Activated CD4-positive, alpha-beta T cell treated with anti-CD3 and anti-CD28 coated beads for 36 hours (primary cell): ENCODE measurements at regions of chr9 and their contacts with region 1.

Region 1: GRCh38 chr9:134163353-134164196 is 789 bp downstream of the RNU6ATAC start:
- DNase-seq: peak; percentile 83
- ATAC-seq: peak; percentile 39
- H3K4me3 Mint-ChIP-seq: no peak overlapping the region
- H3K27ac Mint-ChIP-seq: no peak overlapping the region
- H3K4me1 Mint-ChIP-seq: peaks cover 2% of the 10 kb centered on the region
- H3K27me3 Mint-ChIP-seq: no peaks in the 10 kb centered on the region

Region 2: GRCh38 chr9:134135343-134136118 is 28.0 kb before region 1 on chr9 and contains the start of gene WDR5:
- CTCF ChIA-PET with region 1: interaction called, 5 read pairs
- POLR2A ChIA-PET with region 1: interaction called, 5 read pairs
- intact Hi-C with region 1: loop called (anchors 1 to 2 kb)
- DNase-seq: peak; percentile 95
- ATAC-seq: peak; percentile 78
- H3K4me3 Mint-ChIP-seq: peak within 1 kb of the TSS; percentile 98
- H3K27ac Mint-ChIP-seq: peak within 1 kb of the TSS; percentile 90
- H3K4me1 Mint-ChIP-seq: peaks cover 31% of the 10 kb centered on the region
- H3K27me3 Mint-ChIP-seq: no peaks in the 10 kb centered on the region
- total RNA-seq, gene WDR5: 51.4 to 59.2 TPM

Region 3: DNA sequence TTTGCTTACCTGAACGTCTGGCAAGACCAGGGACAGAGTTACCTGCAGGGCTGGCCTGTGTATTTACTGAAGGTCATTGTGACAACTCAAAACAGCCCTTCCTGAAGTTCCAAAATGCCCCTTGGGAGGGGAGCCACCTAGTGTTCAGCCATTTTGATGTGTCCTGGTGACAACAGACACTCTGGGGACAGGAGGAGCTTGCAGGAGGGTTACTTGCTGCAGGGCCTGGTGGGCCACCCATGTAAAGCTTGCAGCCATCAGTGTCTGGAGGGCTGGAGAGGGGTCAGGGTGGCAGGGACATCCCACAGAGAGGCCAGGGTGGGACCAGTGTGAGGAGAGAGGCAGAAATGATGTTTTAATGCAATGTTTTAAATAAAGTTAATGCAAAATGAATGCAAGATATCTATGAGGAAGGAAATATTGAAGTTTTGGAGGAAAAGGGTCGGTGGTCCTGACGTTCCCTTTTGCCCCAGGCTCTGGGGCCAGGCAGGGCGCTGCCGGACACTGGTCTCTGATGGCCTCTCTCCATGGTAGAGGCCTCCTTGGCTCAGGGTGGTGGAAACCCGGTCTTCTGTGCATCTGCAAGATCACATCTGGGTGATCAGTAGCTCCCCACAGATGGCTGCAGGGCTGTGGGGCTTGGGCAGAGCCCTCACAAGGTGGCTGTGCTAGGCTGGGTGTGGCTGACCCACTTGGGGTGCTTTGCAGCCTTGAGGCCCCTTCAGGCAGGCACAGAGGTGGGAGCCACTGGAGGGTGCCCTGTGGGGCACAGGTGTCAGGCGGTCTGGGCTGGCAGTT is 54.5 kb after region 1 on chr9:
- CTCF ChIA-PET with region 1: no interaction called
- POLR2A ChIA-PET with region 1: no interaction called
- intact Hi-C with region 1: no loop called
- DNase-seq: no peak
- ATAC-seq: no peak
- H3K4me3 Mint-ChIP-seq: no peak overlapping the region
- H3K27ac Mint-ChIP-seq: no peak overlapping the region
- H3K4me1 Mint-ChIP-seq: no peaks in the 10 kb centered on the region
- H3K27me3 Mint-ChIP-seq: no peaks in the 10 kb centered on the region

Region 4: DNA sequence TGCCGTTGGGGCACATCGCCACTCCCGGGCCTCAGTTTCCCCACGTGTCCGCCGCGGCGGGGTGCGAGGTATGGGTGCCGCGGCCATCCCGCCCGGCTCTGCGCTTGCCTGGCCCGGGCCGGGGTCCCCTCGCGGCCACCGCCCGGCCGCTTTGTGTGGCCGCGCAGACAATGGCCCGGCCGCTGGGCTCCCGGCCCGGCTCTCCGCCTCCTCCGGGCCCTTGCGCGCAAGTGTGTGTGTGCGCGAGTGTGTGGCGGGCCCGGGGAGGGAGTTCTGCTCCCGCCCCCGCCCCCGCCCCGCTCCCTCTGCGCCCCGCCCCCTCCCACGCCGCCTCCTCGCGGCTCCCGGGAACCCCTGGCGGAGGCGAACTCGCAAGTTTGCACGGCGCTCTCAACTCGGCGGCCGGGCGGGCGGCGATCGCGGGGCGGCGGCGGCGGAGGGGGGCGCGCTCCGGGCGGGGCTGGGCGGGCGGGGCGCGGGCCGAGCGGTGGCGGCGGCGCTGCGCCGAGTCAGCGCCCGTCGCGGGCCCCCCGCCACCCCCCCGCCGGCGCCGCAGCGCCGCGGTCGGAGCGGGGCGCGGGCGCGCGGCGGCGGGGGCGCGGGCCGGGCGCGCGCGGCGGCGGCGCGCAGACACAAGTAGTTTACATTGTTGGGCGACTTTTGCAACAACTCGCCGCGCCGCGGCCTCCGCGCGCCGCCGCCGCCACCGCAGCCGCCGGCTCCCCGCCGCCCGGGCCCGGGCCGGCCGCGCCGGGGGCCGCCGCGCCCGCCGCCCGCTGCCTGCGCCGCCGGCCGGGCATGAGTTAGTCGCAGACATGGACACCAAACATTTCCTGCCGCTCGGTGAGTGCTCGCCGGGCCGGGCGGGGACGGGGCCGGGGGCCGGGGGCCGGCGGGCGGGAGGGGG is 162.5 kb after region 1 on chr9 and contains the start of gene RXRA:
- CTCF ChIA-PET with region 1: no interaction called
- POLR2A ChIA-PET with region 1: no interaction called
- intact Hi-C with region 1: loop called in 1 of 2 experiments (anchors 1 kb)
- DNase-seq: peak; percentile 68
- ATAC-seq: peak; percentile 48
- H3K4me3 Mint-ChIP-seq: peak within 1 kb of the TSS; percentile 55
- H3K27ac Mint-ChIP-seq: no peak within 1 kb of the TSS
- H3K4me1 Mint-ChIP-seq: peaks cover 3% of the 10 kb centered on the region
- H3K27me3 Mint-ChIP-seq: peaks cover 5% of the 10 kb centered on the region
- total RNA-seq, gene RXRA: 17.6 to 20.9 TPM

Region 5: DNA sequence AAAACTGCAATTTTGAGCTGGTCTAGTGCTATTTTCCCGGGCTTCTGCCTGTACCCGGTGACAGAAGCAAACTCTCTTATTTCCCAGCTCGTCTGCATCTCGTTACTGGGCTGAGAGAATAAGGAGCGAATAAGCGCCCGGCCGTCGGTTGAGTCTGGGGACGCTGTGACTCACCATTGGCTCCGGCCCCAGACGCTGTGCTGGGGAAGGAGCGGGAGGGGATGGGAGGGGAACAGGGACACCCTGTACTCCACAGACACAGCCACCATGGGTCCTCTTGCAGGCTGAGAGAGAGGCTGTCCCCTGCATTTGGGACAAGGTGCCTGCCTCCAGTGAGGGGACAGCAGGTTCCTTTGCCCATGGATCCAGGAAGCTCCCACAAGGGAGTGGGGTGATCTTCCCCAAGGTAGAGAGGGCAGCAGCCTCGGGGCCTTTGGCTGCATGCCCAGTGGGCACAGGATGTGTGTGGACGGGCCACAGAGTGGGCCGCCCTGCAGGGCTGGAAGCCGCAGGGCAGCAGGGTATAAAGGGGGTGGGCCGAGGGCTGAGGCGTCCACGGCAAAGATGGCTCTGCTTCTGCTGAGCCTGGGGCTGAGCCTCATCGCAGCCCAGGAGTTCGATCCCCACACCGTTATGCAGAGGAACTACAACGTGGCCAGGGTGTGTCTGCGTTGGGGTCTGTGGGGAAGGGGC is 1499.3 kb after region 1 on chr9 and contains the start of gene LCN9:
- CTCF ChIA-PET with region 1: no interaction called
- POLR2A ChIA-PET with region 1: no interaction called
- intact Hi-C with region 1: no loop called
- DNase-seq: no peak
- ATAC-seq: no peak
- H3K4me3 Mint-ChIP-seq: no peak within 1 kb of the TSS
- H3K27ac Mint-ChIP-seq: no peak within 1 kb of the TSS
- H3K4me1 Mint-ChIP-seq: no peaks in the 10 kb centered on the region
- H3K27me3 Mint-ChIP-seq: peaks cover 2% of the 10 kb centered on the region
- total RNA-seq, gene LCN9: not detected